PC-9 (cell line): ENCODE measurements at regions of chr1 and their contacts with region 1.

Region 1: DNA sequence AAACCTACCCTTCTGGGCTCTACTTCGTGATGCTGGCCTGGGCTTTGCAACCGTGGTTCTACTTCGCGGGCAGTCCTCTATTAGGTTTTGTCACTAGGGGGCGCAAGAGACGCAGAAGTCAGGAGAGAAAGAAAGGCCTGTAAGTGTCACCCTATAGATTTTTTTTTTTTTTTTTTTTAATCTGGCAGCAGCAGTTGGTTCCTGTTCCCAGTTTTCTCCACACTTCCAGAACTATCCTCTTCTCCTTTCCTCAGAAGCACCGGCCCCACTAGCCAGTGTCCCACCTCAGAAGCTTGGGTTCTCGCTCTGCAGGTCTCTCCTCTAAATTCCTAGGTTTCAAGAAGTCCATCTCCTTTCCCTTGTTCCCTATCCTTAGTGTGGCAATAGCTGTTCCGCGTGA is 9.1 kb upstream of the LCE2D start:
- DNase-seq: peak; percentile 36 to 56
- H3K4me3 ChIP-seq: no peak overlapping the region
- H3K27ac ChIP-seq: no peak overlapping the region
- H3K4me1 ChIP-seq: no peaks in the 10 kb centered on the region
- H3K27me3 ChIP-seq: peaks cover 15% of the 10 kb centered on the region
- CTCF ChIP-seq: peak; percentile 85

Region 2: DNA sequence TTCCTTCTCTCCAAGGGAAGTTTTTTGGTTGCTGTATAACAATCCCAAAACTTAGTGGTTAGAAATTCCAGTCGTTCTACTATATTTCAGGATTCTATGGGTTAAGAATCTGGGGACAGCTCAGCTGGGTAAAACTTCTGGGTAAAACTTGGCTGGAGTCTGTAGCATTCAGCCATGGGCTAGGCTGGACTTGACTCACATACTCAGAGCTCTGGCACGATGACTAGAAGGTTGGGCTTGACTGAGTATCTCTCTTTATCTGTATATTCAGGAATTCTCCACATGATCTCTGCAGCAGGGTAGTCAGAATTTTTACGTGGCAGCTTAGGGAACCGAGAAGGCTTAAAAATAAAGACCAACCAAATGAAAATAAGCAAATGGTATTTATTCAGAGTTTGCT is 402.0 kb before region 1 on chr1:
- CTCF ChIA-PET with region 1: no interaction called
- POLR2A ChIA-PET with region 1: no interaction called
- intact Hi-C with region 1: no loop called
- DNase-seq: no peak
- H3K4me3 ChIP-seq: no peak overlapping the region
- H3K27ac ChIP-seq: no peak overlapping the region
- H3K4me1 ChIP-seq: no peaks in the 10 kb centered on the region
- H3K27me3 ChIP-seq: peaks cover 3% of the 10 kb centered on the region; the same call in 1 of the 2 replicates
- CTCF ChIP-seq: no peak

Region 3: GRCh38 chr1:153232553-153232952 is 578.4 kb after region 1 on chr1:
- CTCF ChIA-PET with region 1: interaction called, 10 read pairs
- POLR2A ChIA-PET with region 1: no interaction called
- intact Hi-C with region 1: no loop called
- DNase-seq: peak in 1 of 2 experiments; percentile 55
- H3K4me3 ChIP-seq: no peak overlapping the region
- H3K27ac ChIP-seq: no peak overlapping the region
- H3K4me1 ChIP-seq: no peaks in the 10 kb centered on the region
- H3K27me3 ChIP-seq: peaks cover 17% of the 10 kb centered on the region; the same call in 1 of the 2 replicates
- CTCF ChIP-seq: no peak